Calu3 (cell line): ENCODE measurements at regions of chr13 and their contacts with region 1.

Region 1: GRCh38 chr13:79936368-79937136 is 404.4 kb downstream of the SPRY2 start:
- DNase-seq: peak; percentile 23
- H3K4me3 Mint-ChIP-seq: no peak overlapping the region
- H3K27ac Mint-ChIP-seq: peak overlapping the region; percentile 98
- H3K4me1 Mint-ChIP-seq: peaks cover 10% of the 10 kb centered on the region
- H3K27me3 Mint-ChIP-seq: no peaks in the 10 kb centered on the region
- CTCF ChIP-seq: no peak

Region 2: GRCh38 chr13:79679334-79679733 is 257.2 kb before region 1 on chr13:
- CTCF ChIA-PET with region 1: no interaction called
- intact Hi-C with region 1: loop called (anchors 1 kb)
- DNase-seq: peak; percentile 48
- H3K4me3 Mint-ChIP-seq: no peak overlapping the region
- H3K27ac Mint-ChIP-seq: no peak overlapping the region
- H3K4me1 Mint-ChIP-seq: peaks cover 18% of the 10 kb centered on the region
- H3K27me3 Mint-ChIP-seq: no peaks in the 10 kb centered on the region
- CTCF ChIP-seq: peak; percentile 29

Region 3: GRCh38 chr13:79775830-79776229 is 160.7 kb before region 1 on chr13:
- CTCF ChIA-PET with region 1: no interaction called
- intact Hi-C with region 1: loop called (anchors 5 kb)
- DNase-seq: peak; percentile 12
- H3K4me3 Mint-ChIP-seq: no peak overlapping the region
- H3K27ac Mint-ChIP-seq: no peak overlapping the region
- H3K4me1 Mint-ChIP-seq: no peaks in the 10 kb centered on the region
- H3K27me3 Mint-ChIP-seq: no peaks in the 10 kb centered on the region
- CTCF ChIP-seq: no peak

Region 4: GRCh38 chr13:79973533-79973963 is 37.0 kb after region 1 on chr13:
- CTCF ChIA-PET with region 1: no interaction called
- intact Hi-C with region 1: no loop called
- DNase-seq: no peak
- H3K4me3 Mint-ChIP-seq: no peak overlapping the region
- H3K27ac Mint-ChIP-seq: no peak overlapping the region
- H3K4me1 Mint-ChIP-seq: no peaks in the 10 kb centered on the region
- H3K27me3 Mint-ChIP-seq: no peaks in the 10 kb centered on the region
- CTCF ChIP-seq: no peak

Region 5: DNA sequence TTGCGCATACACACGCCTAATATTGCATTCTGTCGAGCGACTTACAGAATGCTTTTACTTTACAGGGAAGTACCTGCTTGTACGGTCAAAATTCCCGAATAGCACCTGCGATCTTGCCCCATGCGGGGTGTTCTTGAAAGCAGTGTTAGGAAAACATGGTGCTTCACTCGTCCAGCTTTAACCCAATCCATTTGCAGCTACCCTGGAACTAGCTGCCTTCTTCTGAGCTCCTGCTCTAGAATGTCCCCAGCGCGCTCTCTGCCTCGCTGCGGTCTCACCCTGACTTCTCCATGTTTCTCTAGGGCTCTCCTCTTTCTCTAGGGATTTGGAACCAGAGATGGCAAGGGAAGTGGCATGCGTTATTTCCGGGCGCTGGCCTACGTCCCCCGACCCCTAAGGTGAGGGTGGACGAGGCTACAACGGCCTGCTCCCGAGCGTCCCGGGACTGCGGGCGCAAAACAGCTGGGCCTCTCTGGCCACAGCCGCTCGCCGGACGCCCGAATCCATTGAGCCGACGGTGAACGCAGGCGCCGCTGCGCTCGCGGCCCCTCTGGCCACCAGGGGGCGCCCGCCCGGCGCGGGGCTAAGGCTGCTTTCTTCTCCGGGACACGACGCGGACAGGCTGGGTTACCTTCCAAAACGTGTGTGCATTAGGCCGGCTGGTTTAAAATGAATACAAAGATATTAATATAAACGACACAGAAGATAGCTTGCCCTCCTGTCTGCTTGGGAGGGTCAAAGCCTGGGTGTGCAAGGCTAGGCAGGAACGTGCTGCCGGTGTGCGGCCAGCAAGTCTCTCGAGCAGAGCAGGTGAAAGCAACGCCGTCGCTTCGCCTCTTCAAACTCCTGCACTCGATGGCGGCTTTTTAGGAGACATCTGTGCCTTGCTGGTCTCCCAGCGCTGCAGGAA is 406.2 kb after region 1 on chr13:
- CTCF ChIA-PET with region 1: no interaction called
- intact Hi-C with region 1: loop called (anchors 5 kb)
- DNase-seq: peak; percentile 73
- H3K4me3 Mint-ChIP-seq: no peak overlapping the region
- H3K27ac Mint-ChIP-seq: no peak overlapping the region
- H3K4me1 Mint-ChIP-seq: no peaks in the 10 kb centered on the region
- H3K27me3 Mint-ChIP-seq: no peaks in the 10 kb centered on the region
- CTCF ChIP-seq: peak; percentile 50